T-cell (primary cell): ENCODE measurements at regions of chr3 and their contacts with region 1.

Region 1: GRCh38 chr3:14144423-14145075 is 19.7 kb downstream of the TMEM43 start:
- DNase-seq: peak in 34 of 35 experiments; percentile 35 to 95 (median 66)
- ATAC-seq: peak; percentile 72 to 87 (median 80)
- H3K4me3 ChIP-seq: no peak overlapping the region
- H3K4me3 Mint-ChIP-seq: peak overlapping the region; percentile 65 to 76 (median 70)
- H3K27ac ChIP-seq: peak overlapping the region; percentile 99
- H3K27ac Mint-ChIP-seq: peak overlapping the region; percentile 98 to 100
- H3K4me1 ChIP-seq: peaks cover 22 to 57% of the 10 kb centered on the region in 2 experiments
- H3K4me1 Mint-ChIP-seq: peaks cover 48 to 69% (median 65%) of the 10 kb centered on the region in 3 donors
- H3K27me3 ChIP-seq: no peaks in the 10 kb centered on the region
- H3K27me3 Mint-ChIP-seq: no peaks in the 10 kb centered on the region

Region 2: DNA sequence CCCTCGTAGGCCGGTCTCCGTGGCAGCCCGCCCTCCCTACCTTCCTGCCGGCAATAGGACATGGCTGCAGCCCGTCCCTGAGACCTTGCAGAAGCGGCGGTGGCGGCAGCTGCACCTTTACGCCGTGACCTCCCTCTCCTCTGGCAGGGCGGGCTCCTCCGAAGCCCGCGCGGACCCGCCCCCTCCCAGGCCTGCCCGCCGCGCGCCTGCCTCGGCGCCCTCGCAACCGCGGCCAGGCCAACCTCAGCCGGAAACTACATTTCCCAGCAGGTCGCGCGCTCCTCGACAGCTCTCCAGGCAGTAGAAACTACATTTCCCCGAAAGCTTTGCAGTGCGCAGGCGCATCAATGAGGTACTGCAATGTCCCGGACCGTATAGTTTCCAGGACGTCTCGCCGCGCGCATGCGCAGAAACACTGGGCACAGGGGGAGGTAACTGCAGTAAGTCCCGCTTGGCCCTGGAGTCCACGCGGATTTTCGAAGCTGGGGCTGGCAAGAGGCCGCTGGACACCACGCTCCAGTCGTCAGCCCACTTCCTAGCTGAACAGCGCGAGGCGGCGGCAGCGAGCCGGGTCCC is 19.8 kb before region 1 on chr3 and contains the starts of genes CHCHD4 and TMEM43:
- CTCF ChIA-PET with region 1: interaction called in 1 of 2 experiments, 26 read pairs
- POLR2A ChIA-PET with region 1: interaction called, 4 to 60 read pairs
- DNase-seq: peak; percentile 88 to 100 (median 98)
- ATAC-seq: peak; percentile 91 to 93 (median 92)
- H3K4me3 ChIP-seq: peak within 1 kb of the TSS; percentile 97 to 98
- H3K4me3 Mint-ChIP-seq: peak within 1 kb of the TSS; percentile 93 to 95 (median 94)
- H3K27ac ChIP-seq: peak within 1 kb of the TSS; percentile 86
- H3K27ac Mint-ChIP-seq: peak within 1 kb of the TSS; percentile 90 to 92
- H3K4me1 ChIP-seq: peaks cover 23 to 41% of the 10 kb centered on the region in 2 experiments
- H3K4me1 Mint-ChIP-seq: peaks cover 61 to 73% (median 63%) of the 10 kb centered on the region in 3 donors
- H3K27me3 ChIP-seq: no peaks in the 10 kb centered on the region
- H3K27me3 Mint-ChIP-seq: no peaks in the 10 kb centered on the region
- total RNA-seq, gene CHCHD4: 2.7 to 8.4 (median 8.3) TPM
- total RNA-seq, gene TMEM43: 36.9 to 76.3 (median 63.6) TPM